Activated T-helper 2 cell treated with anti-CD3 and anti-CD28 coated beads, Interferon-gamma antibody, Interleukin-2, Interleukin-4, amounts not matched to agents 10 μg/mL and 5 μg/mL and 100 μg/mL, durations not matched to agents 14 hours and 24 hours and 36 hours (primary cell): ENCODE measurements at regions of chr15 and their contacts with region 1.

Region 1: DNA sequence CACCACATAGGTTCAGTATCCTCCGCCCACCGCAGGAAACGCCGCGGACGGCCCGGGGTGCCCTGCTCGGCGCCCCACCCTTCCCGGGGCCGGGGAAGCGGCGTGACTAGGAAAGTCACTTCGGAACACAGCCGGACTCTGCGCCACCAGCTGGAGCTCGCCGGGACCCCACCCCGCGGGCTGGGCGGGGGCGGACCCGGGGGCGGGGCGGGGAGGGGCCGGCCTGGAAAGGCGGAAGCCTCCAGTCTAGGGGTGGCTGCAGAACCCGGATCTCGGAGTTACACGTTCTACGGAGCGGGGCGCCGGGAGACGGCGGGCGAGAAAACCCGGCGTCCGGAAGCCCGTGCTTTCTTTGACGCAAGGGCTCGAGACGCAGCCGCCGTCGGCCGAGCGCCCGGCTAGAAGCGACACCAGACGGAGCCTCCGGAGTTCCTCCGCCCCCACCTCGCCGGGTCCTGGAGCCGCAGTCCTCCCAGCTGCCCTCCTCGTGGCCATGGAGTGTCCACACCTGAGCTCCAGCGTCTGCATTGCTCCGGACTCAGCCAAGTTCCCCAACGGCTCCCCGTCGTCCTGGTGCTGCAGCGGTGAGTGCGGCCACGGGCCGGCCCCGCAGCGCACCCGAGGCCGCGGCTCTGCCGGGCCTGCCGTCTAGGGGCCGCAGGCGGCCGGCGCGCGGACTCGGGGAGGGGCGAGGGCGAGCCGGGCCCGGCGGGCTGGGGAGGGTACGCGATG is at the start of gene USP3:
- DNase-seq: peak; percentile 92
- H3K4me3 Mint-ChIP-seq: peak within 1 kb of the TSS; percentile 89
- H3K27ac Mint-ChIP-seq: peak within 1 kb of the TSS; percentile 89
- H3K4me1 Mint-ChIP-seq: peaks cover 69% of the 10 kb centered on the region
- H3K27me3 Mint-ChIP-seq: no peaks in the 10 kb centered on the region
- total RNA-seq, gene USP3: 41.2 and 47.6 TPM in 2 replicates

Region 2: DNA sequence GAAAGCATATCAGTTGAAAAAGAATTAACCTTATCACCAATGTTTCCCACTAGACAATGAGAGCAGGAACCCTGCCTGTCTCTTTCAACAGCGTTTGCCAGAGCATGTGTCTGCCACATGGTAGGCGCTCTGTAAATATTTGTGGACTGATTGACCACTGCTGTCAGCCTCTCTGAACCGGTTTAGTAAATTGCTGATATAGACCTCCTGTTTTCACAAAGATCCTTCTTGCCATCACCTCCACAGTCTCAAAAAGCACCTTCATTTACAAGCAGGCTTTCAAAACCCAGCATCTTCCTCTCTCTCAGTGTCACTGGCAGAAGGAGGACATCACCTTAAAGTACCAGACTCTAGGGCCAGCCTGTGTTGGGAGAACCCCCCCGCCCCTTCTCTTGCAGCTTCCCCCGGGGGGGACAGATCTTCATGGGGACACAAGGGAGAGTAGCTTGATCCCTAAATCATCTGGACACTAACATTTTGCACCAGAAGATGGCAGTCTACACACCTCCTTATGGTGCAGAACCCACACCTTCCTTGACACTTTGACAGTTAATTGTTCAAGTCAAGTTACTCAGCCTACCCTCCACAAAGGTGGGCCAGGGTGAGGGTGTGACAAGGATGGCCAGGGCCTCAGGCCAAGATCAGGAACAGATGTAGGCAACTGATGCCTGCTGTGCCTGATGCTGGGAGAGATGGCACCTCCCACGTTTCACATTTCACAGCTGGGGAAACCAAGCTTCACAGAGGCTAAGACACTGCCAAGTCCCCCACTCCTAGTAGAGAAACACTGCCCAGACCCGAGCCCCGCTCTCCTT is 37.8 kb before region 1 on chr15:
- intact Hi-C with region 1: loop called (anchors 5 kb)
- DNase-seq: peak; percentile 41
- H3K4me3 Mint-ChIP-seq: no peak overlapping the region
- H3K27ac Mint-ChIP-seq: no peak overlapping the region
- H3K4me1 Mint-ChIP-seq: peaks cover 26% of the 10 kb centered on the region
- H3K27me3 Mint-ChIP-seq: peaks cover 19% of the 10 kb centered on the region

Region 3: GRCh38 chr15:63473999-63474809 is 30.2 kb before region 1 on chr15:
- intact Hi-C with region 1: loop called (anchors 1 kb)
- DNase-seq: no peak
- H3K4me3 Mint-ChIP-seq: no peak overlapping the region
- H3K27ac Mint-ChIP-seq: peak overlapping the region; percentile 88
- H3K4me1 Mint-ChIP-seq: peaks cover 38% of the 10 kb centered on the region
- H3K27me3 Mint-ChIP-seq: no peaks in the 10 kb centered on the region

Region 4: GRCh38 chr15:63553388-63553791 is 49.0 kb after region 1 on chr15:
- intact Hi-C with region 1: loop called (anchors 5 kb)
- DNase-seq: no peak
- H3K4me3 Mint-ChIP-seq: no peak overlapping the region
- H3K27ac Mint-ChIP-seq: peak overlapping the region; percentile 51
- H3K4me1 Mint-ChIP-seq: peaks cover 29% of the 10 kb centered on the region
- H3K27me3 Mint-ChIP-seq: no peaks in the 10 kb centered on the region

Region 5: GRCh38 chr15:63600616-63601025 is 96.2 kb after region 1 on chr15:
- intact Hi-C with region 1: loop called (anchors 2 kb)
- DNase-seq: peak; percentile 86
- H3K4me3 Mint-ChIP-seq: peak overlapping the region; percentile 92
- H3K27ac Mint-ChIP-seq: peak overlapping the region; percentile 93
- H3K4me1 Mint-ChIP-seq: peaks cover 42% of the 10 kb centered on the region
- H3K27me3 Mint-ChIP-seq: no peaks in the 10 kb centered on the region

Region 6: DNA sequence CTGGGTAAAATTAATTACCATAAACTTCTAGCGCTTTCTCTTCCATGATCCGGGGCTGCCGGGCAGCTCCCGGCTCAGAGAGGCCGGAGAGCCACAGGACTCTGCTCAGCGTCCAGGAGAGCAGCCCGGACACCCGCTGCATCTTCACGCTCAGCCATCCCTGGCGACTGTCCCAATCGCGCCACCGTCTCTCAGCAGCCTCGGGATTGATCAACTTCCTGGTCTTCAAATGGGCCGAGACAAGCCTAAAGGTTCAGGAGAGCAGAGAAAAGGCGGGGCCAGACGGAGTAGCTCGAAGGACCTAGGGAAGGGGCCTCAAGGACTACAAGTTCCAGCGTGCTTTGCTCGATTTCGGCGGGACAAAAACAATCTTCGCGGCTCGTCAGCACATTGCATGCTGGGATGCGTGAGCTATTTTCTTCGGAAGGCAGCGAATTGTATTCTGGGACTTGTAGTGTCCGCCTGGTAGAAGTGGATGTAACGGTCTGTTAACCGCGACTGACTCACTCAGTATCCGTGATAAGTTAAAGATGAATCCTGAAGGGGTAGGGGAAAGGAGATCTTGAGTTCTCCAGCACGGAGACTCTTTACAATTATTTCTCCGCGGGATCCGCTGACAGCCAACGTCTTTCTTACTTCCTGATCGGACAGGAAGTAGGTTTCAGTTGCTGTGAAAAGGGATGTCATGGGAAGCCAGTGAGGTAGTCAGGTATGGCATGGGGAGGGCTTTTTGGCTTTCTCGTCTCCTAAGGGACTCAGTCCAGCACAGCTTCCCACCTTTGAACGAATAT is 589.4 kb after region 1 on chr15 and contains the start of gene CIAO2A:
- intact Hi-C with region 1: loop called (anchors 5 kb)
- DNase-seq: peak; percentile 93
- H3K4me3 Mint-ChIP-seq: peak within 1 kb of the TSS; percentile 94
- H3K27ac Mint-ChIP-seq: peak within 1 kb of the TSS; percentile 92
- H3K4me1 Mint-ChIP-seq: peaks cover 50% of the 10 kb centered on the region
- H3K27me3 Mint-ChIP-seq: no peaks in the 10 kb centered on the region
- total RNA-seq, gene CIAO2A: 76.1 and 78.3 TPM in 2 replicates

Region 7: DNA sequence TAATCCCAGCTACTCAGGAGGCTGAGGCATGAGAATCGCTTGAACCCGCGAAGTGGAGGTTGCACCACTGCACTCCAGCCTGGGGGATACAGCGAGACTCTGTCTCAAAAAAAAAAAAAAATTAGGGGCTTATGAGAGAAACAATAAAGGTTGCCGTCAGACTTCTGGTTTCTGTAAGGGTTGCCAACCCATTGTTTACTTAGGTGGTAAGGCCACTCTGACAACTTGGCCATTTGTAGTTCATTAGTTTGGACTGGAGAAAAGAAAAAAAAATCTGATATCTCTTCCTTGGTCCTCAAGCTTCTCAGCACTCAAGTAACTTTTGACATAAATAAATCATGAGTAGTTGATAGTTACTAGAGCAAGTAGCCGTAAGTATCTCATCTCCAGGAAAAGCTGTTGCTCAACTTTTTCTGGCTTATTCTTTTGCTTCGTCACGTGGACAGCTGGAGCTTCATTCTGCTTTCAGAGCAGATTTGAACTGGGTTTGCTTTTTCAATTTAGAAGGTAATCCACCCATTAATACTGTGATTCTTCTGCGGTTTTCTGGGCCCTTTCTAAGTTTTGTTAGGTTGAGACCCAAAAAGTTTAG is 600.8 kb after region 1 on chr15:
- intact Hi-C with region 1: no loop called
- DNase-seq: no peak
- H3K4me3 Mint-ChIP-seq: no peak overlapping the region
- H3K27ac Mint-ChIP-seq: no peak overlapping the region
- H3K4me1 Mint-ChIP-seq: peaks cover 13% of the 10 kb centered on the region
- H3K27me3 Mint-ChIP-seq: no peaks in the 10 kb centered on the region